ENCODE measurements at regions of chr17 and their contacts with region 1.

Region 1: GRCh38 chr17:10875979-10876555 is 38.2 kb upstream of the PIRT start:
- DNase-seq: peak; percentile 36 to 51
- H3K4me3 ChIP-seq: no peak overlapping the region
- H3K27ac ChIP-seq: no peak overlapping the region
- H3K4me1 ChIP-seq: no peaks in the 10 kb centered on the region
- H3K27me3 ChIP-seq: no peaks in the 10 kb centered on the region
- CTCF ChIP-seq: peak; percentile 54 to 72 (median 62)
- POLR2A ChIP-seq: no peak

Region 2: GRCh38 chr17:11296994-11297393 is 420.9 kb after region 1 on chr17:
- intact Hi-C with region 1: loop called (anchors 5 kb)
- DNase-seq: no peak
- H3K4me3 ChIP-seq: no peak overlapping the region
- H3K27ac ChIP-seq: no peak overlapping the region
- H3K4me1 ChIP-seq: no peaks in the 10 kb centered on the region
- H3K27me3 ChIP-seq: no peaks in the 10 kb centered on the region
- CTCF ChIP-seq: peak in 5 of 6 experiments; percentile 19 to 64 (median 47)
- POLR2A ChIP-seq: no peak

Region 3: DNA sequence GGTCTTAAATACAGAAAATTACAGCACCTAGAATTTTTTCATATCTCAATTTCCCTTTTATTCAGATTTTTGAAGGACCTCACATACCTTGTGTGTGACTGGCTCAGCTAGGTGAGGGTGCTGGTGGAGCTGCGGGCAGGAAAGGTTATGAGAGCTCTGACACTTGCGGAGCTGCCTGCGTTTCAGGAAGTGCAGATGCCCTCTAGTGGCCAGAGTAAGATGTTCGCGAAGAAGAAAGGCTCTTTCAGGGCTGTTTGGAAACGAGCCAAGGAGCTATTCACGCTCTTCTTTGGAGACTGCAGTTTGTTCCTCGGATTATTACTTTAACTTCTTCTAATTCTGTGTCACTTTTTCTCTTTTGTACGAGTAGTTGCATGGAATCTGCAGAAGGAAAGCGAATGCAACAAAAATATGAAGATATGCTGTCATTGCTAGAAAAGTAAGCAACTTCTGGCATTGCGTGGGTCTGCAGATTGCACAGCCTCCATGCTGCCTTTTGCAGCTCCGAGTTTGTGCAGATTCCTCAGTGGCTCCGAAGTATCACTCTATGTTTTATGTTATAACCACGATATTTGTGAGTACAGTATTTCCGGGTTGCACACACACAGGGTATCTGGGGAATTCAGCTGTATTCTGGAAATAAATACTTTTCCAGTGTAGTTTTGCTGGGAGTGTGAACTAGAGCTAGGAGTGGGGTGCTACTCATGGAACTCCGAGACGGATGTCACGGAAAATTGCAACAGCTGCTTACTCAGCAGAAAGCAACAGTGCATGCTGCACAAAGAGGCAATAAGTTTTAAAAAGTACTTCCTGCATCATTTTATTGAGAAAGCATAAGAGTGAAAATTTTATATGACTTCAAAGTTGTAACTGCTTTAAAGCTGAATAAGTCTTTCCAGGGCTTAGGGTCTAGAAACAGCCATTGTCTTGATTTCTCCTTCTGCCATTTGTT is 768.5 kb after region 1 on chr17:
- intact Hi-C with region 1: loop called (anchors 10 kb)
- DNase-seq: peak; percentile 75 to 76
- H3K4me3 ChIP-seq: no peak overlapping the region
- H3K27ac ChIP-seq: no peak overlapping the region
- H3K4me1 ChIP-seq: peaks cover 0 to 5% of the 10 kb centered on the region in 2 donors
- H3K27me3 ChIP-seq: no peaks in the 10 kb centered on the region
- CTCF ChIP-seq: peak; percentile 38 to 80 (median 70)
- POLR2A ChIP-seq: no peak